ENCODE measurements at regions of chr3 and their contacts with region 1.

Region 1: DNA sequence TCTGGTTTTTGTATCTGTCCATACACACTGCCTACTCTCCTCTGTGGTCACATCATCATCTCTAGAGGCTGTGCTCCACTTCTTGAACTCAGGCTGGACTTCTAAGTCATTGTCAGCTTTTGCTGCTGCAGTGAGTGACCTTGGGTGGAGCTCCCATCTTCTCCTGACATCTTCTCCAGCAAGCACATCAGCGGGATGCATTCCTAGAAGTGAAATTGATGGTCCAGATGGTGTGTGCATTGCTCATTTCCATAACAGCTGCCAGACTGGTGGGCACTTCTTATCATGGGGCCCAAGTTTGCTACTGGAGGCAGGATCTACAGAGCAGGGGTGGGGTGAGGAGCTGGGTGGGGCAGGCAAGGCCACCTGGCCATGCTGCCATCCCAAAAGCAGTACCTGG is 109.9 kb downstream of the DNAJB8 start:
- DNase-seq: no peak
- ATAC-seq: no peak
- H3K4me3 ChIP-seq: no peak overlapping the region
- H3K27ac ChIP-seq: no peak overlapping the region
- H3K4me1 ChIP-seq: peaks cover 29% of the 10 kb centered on the region
- H3K27me3 ChIP-seq: no peaks in the 10 kb centered on the region
- CTCF ChIP-seq: no peak
- POLR2A ChIP-seq: no peak
- RAD21 ChIP-seq: no peak

Region 2: DNA sequence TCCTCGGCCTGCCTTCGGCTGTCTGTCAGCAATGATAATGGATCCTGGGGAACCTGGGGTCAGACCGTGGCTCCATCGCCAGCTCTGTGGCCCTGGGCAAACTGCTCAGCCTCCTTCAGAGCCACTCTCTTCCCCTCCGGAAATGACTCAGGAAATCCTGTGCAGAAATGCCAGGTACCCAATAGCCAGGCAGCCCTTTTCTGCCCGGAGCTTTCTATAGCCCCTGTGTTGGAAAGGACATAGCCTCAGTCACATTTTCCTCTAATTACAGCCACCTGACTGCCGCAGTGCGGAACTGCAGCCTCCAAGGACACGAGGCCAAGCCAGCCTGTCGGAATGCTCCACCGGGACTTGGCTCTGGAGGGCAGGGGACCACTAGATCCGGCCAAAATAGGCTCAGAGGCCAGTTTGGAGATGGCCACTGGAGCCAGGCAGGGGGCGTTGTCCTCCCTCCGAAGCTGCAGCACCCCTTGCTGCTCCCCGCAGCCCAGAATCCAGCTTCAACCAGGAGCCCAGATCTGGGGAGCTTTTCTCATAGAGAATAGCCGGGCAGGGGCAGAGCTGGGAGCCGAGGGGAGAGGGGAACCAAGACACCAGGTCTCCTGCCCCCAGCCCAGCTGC is 1869.6 kb before region 1 on chr3:
- CTCF ChIA-PET with region 1: no interaction called
- POLR2A ChIA-PET with region 1: no interaction called
- dilution Hi-C with region 1: no loop called
- in situ Hi-C with region 1: no loop called
- intact Hi-C with region 1: no loop called
- DNase-seq: no peak
- ATAC-seq: no peak
- H3K4me3 ChIP-seq: no peak overlapping the region
- H3K27ac ChIP-seq: no peak overlapping the region
- H3K4me1 ChIP-seq: no peaks in the 10 kb centered on the region
- H3K27me3 ChIP-seq: peaks cover 17% of the 10 kb centered on the region; the same call in 1 of the 2 replicates
- CTCF ChIP-seq: no peak
- POLR2A ChIP-seq: no peak
- RAD21 ChIP-seq: no peak

Region 3: DNA sequence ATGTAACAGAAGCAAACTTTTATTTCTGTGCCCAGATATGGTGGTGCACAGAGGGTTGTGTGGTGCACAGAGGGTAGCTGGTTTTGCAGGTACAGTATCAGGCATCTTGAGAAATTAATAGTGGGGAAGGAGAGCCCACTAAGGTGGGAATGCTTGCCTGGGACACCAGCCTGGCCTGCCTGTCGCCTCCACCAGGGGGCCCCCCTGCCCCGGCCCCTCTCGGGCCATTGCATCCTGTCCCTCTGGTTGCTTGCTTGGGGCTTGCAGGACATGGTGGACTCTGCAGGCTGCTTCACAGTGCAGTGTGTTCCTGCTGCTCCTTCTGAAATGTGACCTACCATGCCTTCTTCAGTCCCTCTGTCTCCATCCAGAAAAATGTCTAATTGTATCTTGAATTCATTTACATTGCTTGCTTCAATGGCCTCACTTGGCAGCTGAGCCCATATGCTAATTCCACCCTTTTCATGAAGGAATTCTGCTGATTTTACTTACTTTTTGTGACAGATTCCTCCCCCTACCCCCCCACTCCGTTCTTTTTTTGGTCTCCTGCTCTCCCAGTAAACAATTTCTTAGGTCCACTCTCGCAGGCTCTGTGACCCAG is 129.9 kb before region 1 on chr3:
- CTCF ChIA-PET with region 1: interaction called, 3 read pairs
- POLR2A ChIA-PET with region 1: interaction called, 15 read pairs
- dilution Hi-C with region 1: no loop called
- in situ Hi-C with region 1: no loop called
- intact Hi-C with region 1: no loop called
- DNase-seq: peak; percentile 7
- ATAC-seq: peak; percentile 78
- H3K4me3 ChIP-seq: no peak overlapping the region
- H3K27ac ChIP-seq: no peak overlapping the region
- H3K4me1 ChIP-seq: peaks cover 4% of the 10 kb centered on the region; the same call in 1 of the 2 replicates
- H3K27me3 ChIP-seq: no peaks in the 10 kb centered on the region
- CTCF ChIP-seq: peak; percentile 59
- POLR2A ChIP-seq: no peak
- RAD21 ChIP-seq: peak; percentile 69

Region 4: GRCh38 chr3:128316481-128316891 is 40.3 kb before region 1 on chr3:
- CTCF ChIA-PET with region 1: no interaction called
- POLR2A ChIA-PET with region 1: no interaction called
- dilution Hi-C with region 1: no loop called
- in situ Hi-C with region 1: no loop called
- intact Hi-C with region 1: loop called (anchors 1 kb)
- DNase-seq: no peak
- ATAC-seq: no peak
- H3K4me3 ChIP-seq: no peak overlapping the region
- H3K27ac ChIP-seq: no peak overlapping the region
- H3K4me1 ChIP-seq: no peaks in the 10 kb centered on the region
- H3K27me3 ChIP-seq: no peaks in the 10 kb centered on the region
- CTCF ChIP-seq: no peak
- POLR2A ChIP-seq: no peak
- RAD21 ChIP-seq: no peak

Measured in IMR-90 (cell line).